ENCODE measurements at regions of chr7 and their contacts with region 1.

Region 1: DNA sequence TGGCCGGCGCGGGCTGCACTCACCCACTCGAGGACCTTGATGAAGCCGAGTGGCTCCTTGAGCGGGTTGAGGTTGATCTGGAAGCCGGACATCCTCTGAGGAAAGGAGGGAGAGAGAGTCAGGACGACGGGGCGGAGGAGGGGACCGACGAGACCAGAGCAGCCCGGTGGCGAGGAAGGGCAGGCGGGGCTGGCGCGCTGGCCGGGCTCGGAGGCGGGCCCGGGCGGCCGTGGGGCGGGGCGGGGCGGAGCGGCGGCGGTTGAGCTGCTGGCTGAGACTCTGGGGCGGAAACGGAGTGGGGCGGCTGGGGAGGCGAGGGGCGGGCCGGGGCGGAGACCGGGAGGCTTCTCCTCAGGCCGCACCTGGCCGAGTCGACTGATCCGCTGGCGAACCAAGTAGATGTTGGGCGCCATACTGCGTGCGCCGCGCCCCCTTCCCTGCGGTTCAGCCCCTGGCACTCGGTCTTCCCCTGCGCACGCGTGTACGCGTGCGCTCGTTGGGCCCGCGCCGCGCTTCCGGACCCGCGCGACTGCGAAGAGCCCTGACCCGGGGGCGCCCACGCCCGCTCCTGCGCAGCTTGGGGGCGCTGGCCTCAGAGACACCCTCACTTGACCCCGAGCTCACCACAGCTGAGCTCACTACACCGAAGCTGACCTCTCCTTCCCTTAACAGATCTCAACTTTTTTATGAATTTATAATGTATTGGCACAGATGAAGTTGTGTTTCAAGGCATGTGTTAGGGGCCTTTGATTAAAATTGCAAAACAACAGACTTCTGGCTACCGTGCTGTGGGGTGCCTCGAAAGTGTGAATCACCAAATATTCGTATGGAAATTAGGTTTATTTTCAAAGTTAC is at the start of gene SYPL1:
- DNase-seq: peak; percentile 91 to 95 (median 93)
- ATAC-seq: peak; percentile 93
- H3K4me3 ChIP-seq: peak within 1 kb of the TSS; percentile 70
- H3K4me3 Mint-ChIP-seq: peak within 1 kb of the TSS; percentile 78 to 97 (median 92)
- H3K27ac ChIP-seq: peak within 1 kb of the TSS; percentile 83
- H3K27ac Mint-ChIP-seq: peak within 1 kb of the TSS; percentile 90 to 99 (median 96)
- H3K4me1 ChIP-seq: peaks cover 14 to 64% of the 10 kb centered on the region in 2 donors
- H3K4me1 Mint-ChIP-seq: peaks cover 45 to 82% (median 71%) of the 10 kb centered on the region in 7 donors
- H3K27me3 ChIP-seq: no peaks in the 10 kb centered on the region
- H3K27me3 Mint-ChIP-seq: peaks cover 0 to 4% (median 0%) of the 10 kb centered on the region in 5 donors
- total RNA-seq, gene SYPL1: 37.5 to 54.0 (median 46.6) TPM

Region 2: GRCh38 chr7:104943502-104944343 is 1168.6 kb before region 1 on chr7:
- CTCF ChIA-PET with region 1: no interaction called
- POLR2A ChIA-PET with region 1: no interaction called
- intact Hi-C with region 1: loop called in 1 of 2 experiments (anchors 1 kb)
- DNase-seq: peak; percentile 31 to 85 (median 68)
- ATAC-seq: peak; percentile 23
- H3K4me3 ChIP-seq: peak overlapping the region; percentile 40
- H3K4me3 Mint-ChIP-seq: peak overlapping the region; percentile 77 to 95 (median 88)
- H3K27ac ChIP-seq: peak overlapping the region; percentile 87
- H3K27ac Mint-ChIP-seq: peak overlapping the region; percentile 95 to 100 (median 100)
- H3K4me1 ChIP-seq: peaks cover 46 to 50% of the 10 kb centered on the region in 2 donors
- H3K4me1 Mint-ChIP-seq: peaks cover 45 to 79% (median 70%) of the 10 kb centered on the region in 7 donors
- H3K27me3 ChIP-seq: no peaks in the 10 kb centered on the region
- H3K27me3 Mint-ChIP-seq: peaks cover 0 to 2% (median 0%) of the 10 kb centered on the region in 5 donors

Region 3: DNA sequence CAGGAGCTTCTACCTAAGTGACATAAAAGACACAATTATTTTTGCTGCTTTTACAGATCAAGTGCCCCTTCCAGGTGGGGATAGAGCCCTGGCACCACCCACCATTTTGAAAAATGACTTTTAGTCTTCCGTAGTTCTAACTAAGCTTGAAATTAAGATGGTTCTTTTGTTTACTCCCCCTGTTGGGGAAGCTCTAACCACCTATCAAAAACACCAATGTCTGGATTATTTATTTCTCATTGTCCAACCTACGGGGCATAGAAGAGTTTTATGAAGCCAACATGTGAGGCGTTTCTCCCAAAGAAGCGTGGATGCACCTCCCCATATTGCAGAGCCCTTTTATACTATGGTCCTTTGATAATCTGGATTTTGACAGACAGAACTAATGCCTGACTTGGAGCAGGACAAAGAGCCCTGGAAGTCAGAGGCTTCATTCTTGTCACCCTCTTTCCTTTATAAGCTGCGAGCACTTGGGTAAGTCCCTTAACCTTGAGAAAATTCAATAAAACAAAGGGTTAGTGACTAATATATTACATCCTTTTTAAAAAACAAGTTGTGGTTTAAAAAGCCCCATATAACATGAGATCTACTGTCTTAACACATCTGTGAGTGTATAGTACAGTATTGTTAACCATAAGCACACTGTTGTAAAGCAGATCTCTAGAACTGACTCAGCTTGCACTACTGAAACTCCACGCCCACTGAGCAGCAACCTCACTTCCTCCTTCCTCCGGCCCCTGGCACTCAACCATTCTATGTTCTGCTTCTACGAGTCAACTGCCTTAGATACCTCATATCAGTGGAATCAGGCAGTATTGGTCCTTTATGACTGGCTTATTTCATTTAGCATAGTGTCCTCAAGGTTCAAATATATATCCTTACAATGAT is 303.4 kb before region 1 on chr7:
- CTCF ChIA-PET with region 1: no interaction called
- POLR2A ChIA-PET with region 1: no interaction called
- intact Hi-C with region 1: loop called in 1 of 2 experiments (anchors 5 kb)
- DNase-seq: peak; percentile 11 to 77 (median 38)
- ATAC-seq: peak; percentile 94
- H3K4me3 ChIP-seq: peak overlapping the region; percentile 25
- H3K4me3 Mint-ChIP-seq: peak overlapping the region in 8 of 10 donors; percentile 1 to 68 (median 31)
- H3K27ac ChIP-seq: peak overlapping the region; percentile 15
- H3K27ac Mint-ChIP-seq: peak overlapping the region in 8 of 9 donors; percentile 0 to 93 (median 45)
- H3K4me1 ChIP-seq: peaks cover 33 to 50% of the 10 kb centered on the region in 2 donors
- H3K4me1 Mint-ChIP-seq: peaks cover 40 to 73% (median 65%) of the 10 kb centered on the region in 7 donors
- H3K27me3 ChIP-seq: no peaks in the 10 kb centered on the region
- H3K27me3 Mint-ChIP-seq: no peaks in the 10 kb centered on the region

Region 4: DNA sequence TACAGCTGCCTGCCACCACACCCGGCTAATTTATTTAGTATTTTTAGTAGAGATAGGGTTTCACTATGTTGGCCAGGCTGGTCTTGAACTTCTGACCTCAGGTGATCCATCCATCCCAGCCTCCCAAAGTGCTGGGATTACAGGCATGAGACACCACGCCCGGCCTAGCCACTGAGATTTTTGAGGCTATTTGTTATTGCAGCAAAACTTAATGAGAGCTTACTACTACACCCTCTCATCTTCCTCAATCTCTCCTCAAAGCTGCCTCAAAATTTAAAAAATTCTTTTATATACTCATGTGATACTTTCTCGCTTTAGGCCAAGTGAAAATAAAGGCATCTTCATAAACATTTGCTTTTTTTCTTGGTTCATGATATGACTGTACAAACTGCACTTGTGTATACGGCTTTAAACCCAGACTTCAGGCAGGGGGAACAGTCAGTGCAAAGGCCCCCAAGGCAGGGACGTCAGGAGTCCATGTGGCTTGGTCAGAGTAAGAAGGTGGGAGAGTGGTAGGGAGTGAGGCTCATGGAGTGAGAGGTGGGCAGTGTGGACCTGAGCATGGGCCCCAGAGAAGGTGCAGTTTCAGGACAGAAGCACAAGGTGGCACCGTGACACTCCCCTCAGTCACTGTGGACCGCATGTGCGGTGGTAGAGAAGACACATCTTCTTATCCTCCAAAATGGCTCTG is 55.7 kb before region 1 on chr7:
- CTCF ChIA-PET with region 1: interaction called, 8 read pairs
- POLR2A ChIA-PET with region 1: no interaction called
- intact Hi-C with region 1: loop called (anchors 1 kb)
- DNase-seq: peak; percentile 42 to 76 (median 68)
- ATAC-seq: peak; percentile 97
- H3K4me3 ChIP-seq: no peak overlapping the region
- H3K4me3 Mint-ChIP-seq: peak overlapping the region in 3 of 10 donors; percentile 38 to 66 (median 49)
- H3K27ac ChIP-seq: no peak overlapping the region
- H3K27ac Mint-ChIP-seq: peak overlapping the region in 5 of 9 donors; percentile 6 to 56 (median 28)
- H3K4me1 ChIP-seq: peaks cover 0 to 12% of the 10 kb centered on the region in 2 donors
- H3K4me1 Mint-ChIP-seq: peaks cover 10 to 30% (median 19%) of the 10 kb centered on the region in 7 donors
- H3K27me3 ChIP-seq: no peaks in the 10 kb centered on the region
- H3K27me3 Mint-ChIP-seq: peaks cover 0 to 18% (median 0%) of the 10 kb centered on the region in 5 donors

Region 5: DNA sequence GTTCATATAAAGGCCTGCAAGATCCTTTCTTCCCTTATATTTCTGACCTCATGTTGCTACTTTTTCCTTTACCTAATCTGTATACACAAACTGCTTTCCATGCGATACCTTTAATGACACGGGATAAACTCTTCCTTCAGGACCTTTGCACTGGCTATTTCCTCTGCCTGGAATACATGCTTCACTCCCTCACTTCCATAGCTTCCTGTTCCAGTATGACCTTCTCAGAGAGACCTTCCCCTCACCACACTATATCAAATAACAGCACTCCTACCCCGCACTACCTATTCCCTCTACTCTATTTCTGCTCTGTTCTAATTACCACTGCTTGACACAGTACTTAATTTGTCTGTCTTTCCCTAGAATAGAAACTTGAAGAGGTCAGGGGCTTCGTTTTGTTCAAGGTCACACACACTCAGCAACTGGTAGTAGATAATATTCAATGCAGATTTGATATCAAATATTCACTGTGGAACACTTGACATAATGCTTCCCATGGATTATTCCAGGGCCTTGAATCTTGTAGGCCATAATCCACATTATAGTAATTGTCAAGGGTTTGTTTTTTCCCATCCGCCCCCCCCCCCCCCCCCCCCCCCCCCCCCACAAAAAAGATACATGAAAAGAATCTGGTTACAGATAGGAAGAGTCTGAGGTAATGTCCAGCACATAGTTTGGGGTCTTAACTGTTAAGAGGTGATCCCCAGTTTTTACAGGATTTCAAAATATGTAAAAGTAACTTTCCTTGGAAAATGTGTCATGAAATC is 11.3 kb before region 1 on chr7:
- CTCF ChIA-PET with region 1: interaction called, 7 read pairs
- POLR2A ChIA-PET with region 1: interaction called, 22 read pairs
- intact Hi-C with region 1: loop called (anchors 1 kb)
- DNase-seq: no peak
- ATAC-seq: no peak
- H3K4me3 ChIP-seq: no peak overlapping the region
- H3K4me3 Mint-ChIP-seq: peak overlapping the region in 4 of 10 donors; percentile 0 to 38 (median 14)
- H3K27ac ChIP-seq: peak overlapping the region; percentile 9
- H3K27ac Mint-ChIP-seq: peak overlapping the region in 8 of 9 donors; percentile 2 to 65 (median 39)
- H3K4me1 ChIP-seq: peaks cover 0 to 26% of the 10 kb centered on the region in 2 donors
- H3K4me1 Mint-ChIP-seq: peaks cover 44 to 71% (median 66%) of the 10 kb centered on the region in 7 donors
- H3K27me3 ChIP-seq: no peaks in the 10 kb centered on the region
- H3K27me3 Mint-ChIP-seq: no peaks in the 10 kb centered on the region

Region 6: DNA sequence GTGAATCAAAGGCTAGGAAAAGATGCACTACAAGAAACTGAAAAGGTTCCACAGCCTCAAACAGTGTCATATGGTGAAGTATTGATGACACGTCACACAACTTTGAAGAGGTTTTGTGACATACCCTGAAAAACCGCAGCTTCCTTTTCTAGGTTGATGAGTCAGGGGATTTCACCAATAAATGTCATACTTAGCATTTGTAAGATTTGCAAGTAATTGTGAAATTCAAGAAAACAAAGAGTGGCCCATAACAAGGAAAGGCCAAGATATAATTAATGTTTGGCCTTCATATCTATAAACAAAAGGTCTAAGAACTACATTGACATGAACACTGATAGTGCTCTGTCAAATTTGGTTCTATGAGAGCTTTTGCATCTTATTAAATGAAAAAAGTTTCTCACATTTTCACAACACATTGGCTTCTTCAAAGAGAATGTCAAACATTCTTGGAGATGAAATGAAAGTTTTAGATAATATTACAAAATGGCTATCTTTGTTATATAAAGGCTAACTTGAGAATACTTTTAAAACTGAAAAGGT is 234.4 kb after region 1 on chr7:
- CTCF ChIA-PET with region 1: no interaction called
- POLR2A ChIA-PET with region 1: no interaction called
- intact Hi-C with region 1: loop called in 1 of 2 experiments (anchors 2 kb)
- DNase-seq: peak in 8 of 9 donors; percentile 28 to 61 (median 50)
- ATAC-seq: peak; percentile 78
- H3K4me3 ChIP-seq: no peak overlapping the region
- H3K4me3 Mint-ChIP-seq: peak overlapping the region in 1 of 10 donors; percentile 47
- H3K27ac ChIP-seq: no peak overlapping the region
- H3K27ac Mint-ChIP-seq: peak overlapping the region in 2 of 9 donors; percentile 19 to 94
- H3K4me1 ChIP-seq: peaks cover 6 to 19% of the 10 kb centered on the region in 2 donors
- H3K4me1 Mint-ChIP-seq: peaks cover 5 to 35% (median 13%) of the 10 kb centered on the region in 7 donors
- H3K27me3 ChIP-seq: no peaks in the 10 kb centered on the region
- H3K27me3 Mint-ChIP-seq: peaks cover 1 to 61% (median 31%) of the 10 kb centered on the region in 5 donors

Region 7: DNA sequence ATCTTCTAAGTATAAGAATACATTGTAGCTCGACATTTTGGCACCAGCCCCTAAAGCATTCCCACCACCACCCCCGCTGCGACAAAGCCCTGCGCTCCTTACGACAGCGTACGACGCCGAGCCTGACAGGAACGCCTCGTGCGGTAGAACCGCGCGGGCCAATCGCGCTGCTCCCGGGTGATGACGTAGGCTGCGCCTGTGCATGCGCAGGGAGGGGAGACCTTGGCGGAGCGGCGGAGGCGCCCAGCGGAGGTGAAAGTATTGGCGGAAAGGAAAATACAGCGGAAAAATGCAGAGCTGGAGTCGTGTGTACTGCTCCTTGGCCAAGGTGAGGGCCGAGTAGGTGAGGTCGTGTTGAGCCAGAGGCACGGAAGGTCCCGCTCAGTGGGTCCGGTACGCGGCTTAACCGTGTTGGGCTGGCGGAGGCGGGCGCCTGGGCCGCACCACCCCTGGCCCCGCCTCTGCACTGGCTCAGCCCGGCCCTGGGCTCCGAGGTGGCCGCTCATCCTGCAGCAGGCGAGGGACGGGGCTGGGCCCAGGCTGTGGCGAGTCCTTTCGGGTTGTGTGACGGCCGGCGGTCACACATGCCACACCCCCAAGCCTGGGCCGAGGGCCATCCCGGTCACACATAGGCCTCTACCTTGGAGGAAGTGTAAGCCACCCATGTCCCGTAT is 1778.8 kb after region 1 on chr7 and contains the start of gene DLD:
- CTCF ChIA-PET with region 1: no interaction called
- POLR2A ChIA-PET with region 1: no interaction called
- intact Hi-C with region 1: loop called in 1 of 2 experiments (anchors 5 kb)
- DNase-seq: peak; percentile 89 to 94 (median 93)
- ATAC-seq: peak; percentile 98
- H3K4me3 ChIP-seq: peak within 1 kb of the TSS; percentile 93
- H3K4me3 Mint-ChIP-seq: peak within 1 kb of the TSS; percentile 89 to 100 (median 97)
- H3K27ac ChIP-seq: peak within 1 kb of the TSS; percentile 97
- H3K27ac Mint-ChIP-seq: peak within 1 kb of the TSS; percentile 94 to 100 (median 98)
- H3K4me1 ChIP-seq: peaks cover 5 to 35% of the 10 kb centered on the region in 2 donors
- H3K4me1 Mint-ChIP-seq: peaks cover 20 to 55% (median 52%) of the 10 kb centered on the region in 7 donors
- H3K27me3 ChIP-seq: no peaks in the 10 kb centered on the region
- H3K27me3 Mint-ChIP-seq: peaks cover 0 to 3% (median 0%) of the 10 kb centered on the region in 5 donors
- total RNA-seq, gene DLD: 44.5 to 69.3 (median 53.7) TPM